ENCODE measurements at regions of chr3 and their contacts with region 1.

Region 1: DNA sequence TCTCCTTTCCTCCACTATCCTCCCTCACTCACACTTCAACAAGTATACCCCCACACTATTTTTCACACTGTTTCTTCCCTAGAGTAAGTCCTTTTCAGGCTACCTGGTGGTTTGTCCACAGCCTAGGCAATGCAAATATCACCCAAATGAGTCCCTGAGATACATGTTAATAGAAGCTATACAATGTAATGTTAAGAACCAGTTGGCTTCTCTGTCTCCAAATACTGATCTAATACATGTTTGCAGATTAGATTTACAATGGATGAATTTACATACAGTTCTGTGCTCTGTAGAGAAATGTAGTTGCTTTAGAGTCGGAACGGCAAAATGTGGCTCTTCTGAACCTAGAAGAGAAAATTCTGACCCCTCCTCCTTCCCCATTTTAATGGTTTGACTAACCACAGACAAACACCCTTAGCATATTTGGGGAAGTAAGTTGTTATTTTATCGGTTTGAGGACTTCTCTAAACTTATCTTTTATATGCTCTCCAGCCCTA is 63.6 kb upstream of the MBNL1 start:
- DNase-seq: no peak
- H3K4me3 Mint-ChIP-seq: no peak overlapping the region
- H3K27ac Mint-ChIP-seq: no peak overlapping the region
- H3K4me1 Mint-ChIP-seq: peaks cover 23% of the 10 kb centered on the region
- H3K27me3 Mint-ChIP-seq: no peaks in the 10 kb centered on the region
- CTCF ChIP-seq: no peak

Region 2: DNA sequence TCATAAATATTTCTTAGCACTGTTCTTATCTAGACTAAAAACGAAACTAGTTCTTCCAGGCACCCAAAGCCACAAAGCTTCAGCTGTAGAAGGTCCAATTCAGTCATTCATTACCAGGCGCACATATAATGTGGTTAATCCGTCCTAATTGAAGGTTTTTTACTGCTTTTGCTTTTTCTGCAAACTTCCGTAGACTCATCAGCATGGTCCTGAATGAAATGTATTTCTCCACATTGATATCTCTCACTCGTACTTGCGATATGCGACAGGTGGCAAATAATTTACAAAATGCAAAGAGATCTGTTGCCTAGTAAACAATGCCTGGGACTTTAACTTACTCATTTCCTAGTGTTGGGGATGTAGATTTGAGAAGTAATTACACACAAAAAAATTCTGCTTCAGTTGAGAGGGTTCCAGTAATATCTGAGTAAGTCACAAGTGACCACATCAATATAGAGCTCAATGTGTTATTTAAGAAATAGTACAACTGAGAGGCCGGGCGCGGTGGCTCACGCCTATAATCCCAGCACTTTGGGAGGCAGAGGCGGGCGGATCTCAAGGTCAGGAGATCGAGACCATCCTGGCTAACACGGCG is 11.4 kb before region 1 on chr3:
- CTCF ChIA-PET with region 1: interaction called, 10 read pairs
- intact Hi-C with region 1: no loop called
- DNase-seq: peak; percentile 9
- H3K4me3 Mint-ChIP-seq: peak overlapping the region; percentile 68
- H3K27ac Mint-ChIP-seq: peak overlapping the region; percentile 23
- H3K4me1 Mint-ChIP-seq: peaks cover 8% of the 10 kb centered on the region
- H3K27me3 Mint-ChIP-seq: no peaks in the 10 kb centered on the region
- CTCF ChIP-seq: no peak

Measured in Calu3 (cell line).